CD14-positive monocyte (primary cell): ENCODE measurements at regions of chr1 and their contacts with region 1.

Region 1: GRCh38 chr1:59699227-59699847 is 115.4 kb upstream of the HOOK1 start:
- DNase-seq: peak in 2 of 3 donors; percentile 56 to 57
- H3K4me3 ChIP-seq: peak overlapping the region in 1 of 3 experiments; percentile 8
- H3K4me3 Mint-ChIP-seq: no peak overlapping the region
- H3K27ac ChIP-seq: peak overlapping the region in 1 of 2 donors; percentile 75
- H3K27ac Mint-ChIP-seq: peak overlapping the region in 5 of 7 donors; percentile 17 to 86 (median 51)
- H3K4me1 ChIP-seq: peaks cover 41 to 44% of the 10 kb centered on the region in 2 donors
- H3K4me1 Mint-ChIP-seq: peaks cover 42% of the 10 kb centered on the region
- H3K27me3 ChIP-seq: no peaks in the 10 kb centered on the region
- H3K27me3 Mint-ChIP-seq: no peaks in the 10 kb centered on the region
- CTCF ChIP-seq: peak; percentile 89

Region 2: GRCh38 chr1:58739856-58740466 is 959.4 kb before region 1 on chr1:
- intact Hi-C with region 1: loop called (anchors 5 to 10 kb)
- DNase-seq: peak; percentile 35 to 74 (median 54)
- H3K4me3 ChIP-seq: no peak overlapping the region
- H3K4me3 Mint-ChIP-seq: no peak overlapping the region
- H3K27ac ChIP-seq: peak overlapping the region in 1 of 2 donors; percentile 63
- H3K27ac Mint-ChIP-seq: no peak overlapping the region
- H3K4me1 ChIP-seq: peaks cover 16 to 25% of the 10 kb centered on the region in 2 donors
- H3K4me1 Mint-ChIP-seq: peaks cover 24% of the 10 kb centered on the region
- H3K27me3 ChIP-seq: no peaks in the 10 kb centered on the region
- H3K27me3 Mint-ChIP-seq: peaks cover 2 to 3% (median 2%) of the 10 kb centered on the region in 3 donors
- CTCF ChIP-seq: peak; percentile 92

Region 3: GRCh38 chr1:58903514-58904298 is 795.6 kb before region 1 on chr1:
- intact Hi-C with region 1: loop called in 1 of 2 experiments (anchors 10 kb)
- DNase-seq: peak; percentile 74 to 82 (median 76)
- H3K4me3 ChIP-seq: peak overlapping the region; percentile 33 to 76 (median 48)
- H3K4me3 Mint-ChIP-seq: peak overlapping the region; percentile 80 to 88
- H3K27ac ChIP-seq: peak overlapping the region; percentile 91 to 92
- H3K27ac Mint-ChIP-seq: peak overlapping the region; percentile 92 to 97 (median 97)
- H3K4me1 ChIP-seq: peaks cover 34 to 49% of the 10 kb centered on the region in 2 donors
- H3K4me1 Mint-ChIP-seq: peaks cover 46% of the 10 kb centered on the region
- H3K27me3 ChIP-seq: no peaks in the 10 kb centered on the region
- H3K27me3 Mint-ChIP-seq: peaks cover 0 to 6% (median 4%) of the 10 kb centered on the region in 3 donors
- CTCF ChIP-seq: no peak

Region 4: GRCh38 chr1:59146651-59147358 is 552.5 kb before region 1 on chr1:
- intact Hi-C with region 1: loop called in 1 of 2 experiments (anchors 10 kb)
- DNase-seq: peak; percentile 17 to 47 (median 19)
- H3K4me3 ChIP-seq: peak overlapping the region; percentile 28 to 73 (median 31)
- H3K4me3 Mint-ChIP-seq: peak overlapping the region; percentile 81 to 98
- H3K27ac ChIP-seq: no peak overlapping the region
- H3K27ac Mint-ChIP-seq: peak overlapping the region in 5 of 7 donors; percentile 13 to 86 (median 76)
- H3K4me1 ChIP-seq: peaks cover 18 to 29% of the 10 kb centered on the region in 2 donors
- H3K4me1 Mint-ChIP-seq: peaks cover 39% of the 10 kb centered on the region
- H3K27me3 ChIP-seq: peaks cover 2 to 7% of the 10 kb centered on the region in 2 donors
- H3K27me3 Mint-ChIP-seq: peaks cover 13 to 20% (median 19%) of the 10 kb centered on the region in 3 donors
- CTCF ChIP-seq: peak; percentile 34

Region 5: GRCh38 chr1:59296358-59297256 is 402.7 kb before region 1 on chr1 and contains the start of gene FGGY:
- intact Hi-C with region 1: loop called (anchors 5 to 10 kb)
- DNase-seq: peak; percentile 98 to 99 (median 99)
- H3K4me3 ChIP-seq: peak within 1 kb of the TSS; percentile 50 to 90 (median 85)
- H3K4me3 Mint-ChIP-seq: peak within 1 kb of the TSS; percentile 79 to 90
- H3K27ac ChIP-seq: peak within 1 kb of the TSS; percentile 95 to 99
- H3K27ac Mint-ChIP-seq: peak within 1 kb of the TSS; percentile 96 to 99 (median 97)
- H3K4me1 ChIP-seq: peaks cover 42 to 48% of the 10 kb centered on the region in 2 donors
- H3K4me1 Mint-ChIP-seq: peaks cover 45% of the 10 kb centered on the region
- H3K27me3 ChIP-seq: no peaks in the 10 kb centered on the region
- H3K27me3 Mint-ChIP-seq: peaks cover 0 to 3% (median 0%) of the 10 kb centered on the region in 3 donors
- CTCF ChIP-seq: no peak
- polyA plus RNA-seq, gene FGGY: 2.3 to 4.3 (median 2.9) TPM

Region 6: DNA sequence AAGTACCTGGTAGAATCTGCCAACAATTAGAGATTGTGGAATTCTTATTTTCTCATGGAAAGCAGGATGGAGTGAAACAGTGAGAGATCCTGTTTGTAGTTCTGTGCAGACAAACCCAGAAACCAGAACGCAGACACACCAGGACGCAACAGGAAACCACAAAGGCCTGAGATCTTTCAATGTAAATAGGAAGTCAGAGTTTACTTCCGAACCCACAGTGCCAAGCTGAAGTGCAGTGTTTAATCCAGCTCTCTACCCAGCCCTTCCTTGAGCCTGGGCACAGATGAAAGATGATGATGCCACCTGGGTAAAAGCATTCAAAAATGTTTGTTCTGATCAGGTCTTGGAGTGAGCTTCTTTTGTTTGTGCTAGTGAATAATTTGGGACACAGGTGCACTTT is 128.8 kb before region 1 on chr1:
- intact Hi-C with region 1: loop called in 1 of 2 experiments (anchors 5 kb)
- DNase-seq: peak; percentile 59 to 84 (median 66)
- H3K4me3 ChIP-seq: peak overlapping the region in 1 of 3 experiments; percentile 56
- H3K4me3 Mint-ChIP-seq: peak overlapping the region in 1 of 2 donors; percentile 75
- H3K27ac ChIP-seq: no peak overlapping the region
- H3K27ac Mint-ChIP-seq: peak overlapping the region in 5 of 7 donors; percentile 26 to 85 (median 66)
- H3K4me1 ChIP-seq: peaks cover 31 to 35% of the 10 kb centered on the region in 2 donors
- H3K4me1 Mint-ChIP-seq: peaks cover 43% of the 10 kb centered on the region
- H3K27me3 ChIP-seq: no peaks in the 10 kb centered on the region
- H3K27me3 Mint-ChIP-seq: peaks cover 2 to 6% (median 3%) of the 10 kb centered on the region in 3 donors
- CTCF ChIP-seq: no peak